MCF 10A (cell line): ENCODE measurements at regions of chr15 and their contacts with region 1.

Region 1: DNA sequence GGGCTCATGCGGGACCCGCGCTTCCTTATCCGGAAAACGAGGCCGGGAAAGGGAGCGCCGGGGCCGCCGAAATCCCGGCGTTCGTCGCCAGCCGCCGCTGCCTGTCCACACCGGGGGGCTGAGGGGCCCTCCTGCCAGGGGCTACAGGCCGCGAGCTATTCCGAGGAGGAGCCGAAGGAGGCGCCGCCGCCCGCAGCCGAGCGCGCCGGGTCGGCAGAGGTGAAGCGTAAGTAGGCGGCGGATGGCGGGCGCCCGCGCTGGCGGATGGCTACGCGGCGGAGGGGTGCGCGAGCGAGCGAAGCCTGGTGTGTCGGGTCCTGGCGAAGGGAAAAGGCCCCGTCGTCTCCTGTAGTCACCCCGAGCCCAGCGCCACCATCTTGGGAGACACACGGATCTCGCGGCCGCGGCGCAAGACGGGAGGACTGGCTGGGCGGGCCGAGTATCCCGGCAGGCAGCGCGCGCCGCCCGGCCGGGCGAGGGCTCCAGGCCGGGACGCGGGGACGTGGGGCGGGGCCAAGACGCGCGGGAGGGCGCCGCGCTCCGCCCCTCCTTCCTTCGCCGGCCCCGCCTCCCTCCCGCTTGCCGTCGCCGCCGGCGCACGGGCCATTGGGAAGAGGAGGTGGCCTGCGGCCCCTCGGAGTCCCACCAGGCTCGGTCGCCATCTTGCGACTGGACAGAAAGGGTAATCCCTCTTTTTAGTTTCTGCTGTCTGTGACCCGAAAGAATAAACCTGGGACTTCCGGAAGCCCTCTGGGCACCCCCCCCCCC is at the start of gene UBE3A:
- DNase-seq: peak; percentile 89
- H3K4me3 Mint-ChIP-seq: peak within 1 kb of the TSS; percentile 86
- H3K27ac Mint-ChIP-seq: peak within 1 kb of the TSS; percentile 95
- H3K4me1 Mint-ChIP-seq: peaks cover 6% of the 10 kb centered on the region
- H3K27me3 Mint-ChIP-seq: no peaks in the 10 kb centered on the region
- CTCF ChIP-seq: peak; percentile 2
- total RNA-seq, gene UBE3A: 81.2 and 101 TPM in 2 replicates

Region 2: GRCh38 chr15:24956111-24956838 is 482.5 kb before region 1 on chr15:
- CTCF ChIA-PET with region 1: no interaction called
- POLR2A ChIA-PET with region 1: no interaction called
- intact Hi-C with region 1: loop called (anchors 5 kb)
- DNase-seq: peak; percentile 68
- H3K4me3 Mint-ChIP-seq: peak overlapping the region; percentile 94
- H3K27ac Mint-ChIP-seq: peak overlapping the region; percentile 91
- H3K4me1 Mint-ChIP-seq: no peaks in the 10 kb centered on the region
- H3K27me3 Mint-ChIP-seq: no peaks in the 10 kb centered on the region
- CTCF ChIP-seq: no peak

Region 3: DNA sequence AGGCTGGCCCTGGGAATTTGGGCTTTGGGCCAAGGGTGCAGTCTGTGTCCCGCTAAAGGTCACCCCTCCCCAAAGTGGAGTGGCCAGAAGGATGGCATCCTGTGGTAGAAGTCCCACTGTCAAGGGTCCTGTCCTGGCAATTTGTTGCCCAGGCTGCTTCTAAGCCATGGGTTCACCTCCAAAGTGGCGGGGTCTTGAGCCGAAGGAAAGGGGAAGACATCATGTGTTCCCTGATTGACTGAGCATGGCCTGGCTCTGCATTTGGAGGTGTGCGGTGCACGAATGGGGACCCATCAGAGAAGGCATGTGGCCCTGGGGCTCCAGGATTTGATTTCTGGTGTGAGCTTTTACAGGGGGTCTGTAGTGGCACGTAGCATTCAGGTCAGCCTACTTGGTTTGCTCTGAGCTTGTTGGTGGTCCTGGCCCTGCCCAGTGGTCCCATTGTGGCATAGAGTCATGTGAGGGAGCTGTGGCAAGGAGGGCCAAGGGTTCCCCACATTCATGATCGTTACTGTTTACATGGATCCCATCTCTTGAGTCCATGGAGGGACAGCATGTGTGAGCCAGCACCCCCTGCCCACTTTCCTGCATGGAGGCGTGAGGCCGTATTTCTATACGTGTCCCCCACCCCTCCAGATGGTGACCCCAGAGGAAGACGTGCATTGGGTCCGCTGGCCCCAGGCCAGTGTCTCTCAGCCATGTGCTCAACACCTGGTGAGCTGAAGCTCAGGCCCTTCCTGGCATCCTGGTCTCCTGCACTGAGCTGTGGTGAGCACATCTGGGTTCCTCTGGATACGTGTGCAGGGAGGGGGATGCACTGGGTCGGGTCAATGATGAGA is 258.9 kb before region 1 on chr15:
- CTCF ChIA-PET with region 1: no interaction called
- POLR2A ChIA-PET with region 1: no interaction called
- intact Hi-C with region 1: no loop called
- DNase-seq: no peak
- H3K4me3 Mint-ChIP-seq: no peak overlapping the region
- H3K27ac Mint-ChIP-seq: no peak overlapping the region
- H3K4me1 Mint-ChIP-seq: no peaks in the 10 kb centered on the region
- H3K27me3 Mint-ChIP-seq: no peaks in the 10 kb centered on the region
- CTCF ChIP-seq: no peak

Region 4: DNA sequence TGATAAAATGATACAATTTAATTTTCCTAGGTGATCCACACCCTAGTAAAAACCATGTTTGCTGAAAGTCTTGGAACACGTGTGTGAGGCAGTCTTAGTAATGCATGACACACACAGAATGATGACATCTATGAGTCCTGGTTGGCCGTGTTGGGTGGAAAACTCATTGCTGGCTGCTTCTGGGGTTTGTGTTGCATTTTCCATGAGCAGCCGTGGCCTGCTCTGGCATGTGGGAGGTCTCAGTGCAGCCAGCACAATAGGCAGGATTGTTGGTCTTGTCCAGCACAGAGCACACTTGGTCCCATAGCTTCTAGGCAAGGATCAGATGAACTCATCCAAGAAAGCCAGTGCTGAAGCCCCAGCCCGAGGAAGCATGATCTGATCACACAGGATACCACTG is 172.8 kb after region 1 on chr15:
- CTCF ChIA-PET with region 1: no interaction called
- POLR2A ChIA-PET with region 1: no interaction called
- intact Hi-C with region 1: no loop called
- DNase-seq: no peak
- H3K4me3 Mint-ChIP-seq: no peak overlapping the region
- H3K27ac Mint-ChIP-seq: no peak overlapping the region
- H3K4me1 Mint-ChIP-seq: no peaks in the 10 kb centered on the region
- H3K27me3 Mint-ChIP-seq: no peaks in the 10 kb centered on the region
- CTCF ChIP-seq: no peak